ENCODE measurements at regions of chr6 and their contacts with region 1.

Region 1: DNA sequence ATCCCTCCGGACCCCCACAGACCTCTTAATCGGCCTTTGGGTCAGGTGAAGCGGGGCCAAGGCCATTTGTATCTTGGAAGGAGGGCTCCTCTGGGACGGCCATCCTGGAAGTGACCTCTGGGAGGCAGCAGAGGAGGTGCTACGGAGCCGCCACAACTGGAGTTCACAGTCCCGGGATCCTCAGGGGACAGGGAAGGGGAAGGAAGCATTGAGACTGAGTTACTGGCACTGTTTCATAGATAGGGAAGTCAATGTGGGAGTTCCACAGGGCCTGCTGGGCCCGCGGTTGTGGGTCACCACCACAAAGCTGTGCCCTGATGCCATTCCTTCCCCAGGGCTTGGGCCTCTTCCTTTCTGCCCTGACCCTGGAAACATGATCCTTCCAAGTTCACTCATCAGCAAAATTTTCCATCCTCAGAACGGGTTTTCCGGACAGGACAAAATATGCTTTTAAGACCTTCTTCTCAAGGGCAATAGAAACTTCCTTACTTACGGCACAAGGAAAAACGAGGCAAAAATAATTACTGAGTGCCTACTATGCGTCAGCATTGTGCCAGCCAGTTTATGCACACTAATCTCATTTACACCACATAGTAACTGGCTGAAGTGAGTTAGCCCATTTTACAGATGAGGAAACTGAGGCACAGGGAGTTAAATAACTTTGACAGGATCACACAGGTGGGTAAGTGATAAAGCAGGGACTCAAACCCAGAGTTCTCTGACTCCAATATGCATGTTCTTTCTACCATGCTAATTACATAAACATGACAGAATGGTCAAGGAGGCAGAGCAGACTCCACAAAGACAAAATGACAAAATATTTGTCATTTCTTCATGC is 143.8 kb downstream of the UNC5CL start:
- DNase-seq: peak; percentile 27 to 51
- ATAC-seq: peak; percentile 79 to 88
- H3K4me3 ChIP-seq: no peak overlapping the region
- H3K27ac ChIP-seq: no peak overlapping the region
- H3K4me1 ChIP-seq: peaks cover 2 to 13% of the 10 kb centered on the region in 2 donors
- H3K27me3 ChIP-seq: no peaks in the 10 kb centered on the region
- CTCF ChIP-seq: peak; percentile 31 to 73 (median 67)
- POLR2A ChIP-seq: no peak

Region 2: GRCh38 chr6:39934131-39934757 is 960.9 kb before region 1 on chr6 and contains the start of gene MOCS1:
- in situ Hi-C with region 1: no loop called
- intact Hi-C with region 1: loop called (anchors 10 kb)
- DNase-seq: peak; percentile 87 to 92
- ATAC-seq: peak; percentile 39 to 63
- H3K4me3 ChIP-seq: peak within 1 kb of the TSS; percentile 80 to 98 (median 94)
- H3K27ac ChIP-seq: peak within 1 kb of the TSS; percentile 95 to 99 (median 97)
- H3K4me1 ChIP-seq: peaks cover 59 to 63% of the 10 kb centered on the region in 2 donors
- H3K27me3 ChIP-seq: no peaks in the 10 kb centered on the region
- CTCF ChIP-seq: no peak
- POLR2A ChIP-seq: peak; percentile 96 to 97
- total RNA-seq, gene MOCS1: 26.4 to 61.7 (median 38.4) TPM

Region 3: DNA sequence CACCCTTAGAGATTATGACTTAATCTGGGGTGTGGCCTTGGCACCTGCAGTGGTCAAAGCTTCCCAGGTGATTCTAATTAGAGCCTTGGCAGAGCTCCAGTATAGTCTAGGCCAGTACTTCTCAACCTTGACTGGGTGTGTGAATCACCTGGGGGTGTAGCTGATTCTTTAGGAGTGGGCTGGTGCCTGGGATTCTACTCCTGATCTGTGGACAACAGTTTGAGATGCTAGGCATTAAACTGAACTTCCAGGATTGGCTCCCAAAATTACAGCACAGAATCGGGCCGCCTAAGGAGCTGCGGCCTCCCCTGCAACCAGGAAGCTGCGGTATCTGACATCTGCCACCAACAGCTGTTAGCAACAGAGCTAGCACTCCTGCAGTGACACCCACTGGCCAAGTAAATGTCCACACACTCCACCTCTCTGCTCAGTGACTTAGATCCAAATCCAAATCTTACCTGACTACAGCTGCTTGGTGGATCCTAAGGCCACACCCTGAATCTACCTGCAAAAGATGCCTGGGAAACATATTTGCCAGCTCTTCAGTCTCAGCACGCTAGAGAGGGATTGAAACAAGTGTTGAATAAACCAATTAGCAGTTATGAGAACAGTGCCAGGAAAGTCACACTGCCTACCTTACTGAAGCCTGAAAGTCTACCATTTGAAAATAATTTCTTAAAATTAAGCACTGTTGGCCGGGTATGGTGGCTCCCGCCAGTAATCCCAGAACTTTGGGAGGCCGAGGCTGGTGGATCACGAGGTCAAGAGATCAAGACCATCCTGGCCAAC is 17.2 kb after region 1 on chr6:
- in situ Hi-C with region 1: no loop called
- intact Hi-C with region 1: loop called (anchors 1 kb)
- DNase-seq: peak in 1 of 2 donors; percentile 59
- ATAC-seq: peak; percentile 90 to 97
- H3K4me3 ChIP-seq: no peak overlapping the region
- H3K27ac ChIP-seq: no peak overlapping the region
- H3K4me1 ChIP-seq: peaks cover 6 to 7% of the 10 kb centered on the region in 2 donors
- H3K27me3 ChIP-seq: no peaks in the 10 kb centered on the region
- CTCF ChIP-seq: peak; percentile 39 to 67 (median 63)
- POLR2A ChIP-seq: no peak

Region 4: DNA sequence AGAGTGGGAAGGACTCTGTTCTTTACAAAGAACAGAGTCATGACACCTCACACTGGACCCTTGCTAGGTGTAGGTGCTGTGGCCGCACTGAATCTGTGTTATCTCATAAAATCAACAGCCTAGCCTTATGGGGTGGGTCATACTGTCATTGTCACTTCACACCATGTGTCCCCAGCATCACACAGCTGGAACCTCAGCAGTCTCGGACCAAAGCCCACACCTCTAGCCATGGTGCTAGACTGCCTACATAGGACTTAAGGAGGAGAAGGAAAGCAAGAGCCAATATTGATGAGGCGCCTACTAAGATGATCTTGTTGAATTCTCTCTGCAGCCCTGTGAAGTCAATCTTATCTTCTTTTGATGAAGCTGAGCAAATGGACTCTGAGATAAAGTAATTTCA is 112.8 kb after region 1 on chr6:
- in situ Hi-C with region 1: no loop called
- intact Hi-C with region 1: no loop called
- DNase-seq: no peak
- ATAC-seq: no peak
- H3K4me3 ChIP-seq: no peak overlapping the region
- H3K27ac ChIP-seq: no peak overlapping the region
- H3K4me1 ChIP-seq: peaks cover 0 to 3% of the 10 kb centered on the region in 2 donors
- H3K27me3 ChIP-seq: no peaks in the 10 kb centered on the region
- CTCF ChIP-seq: no peak
- POLR2A ChIP-seq: no peak

Region 5: GRCh38 chr6:41021832-41022231 is 126.7 kb after region 1 on chr6:
- in situ Hi-C with region 1: loop called (anchors 5 to 10 kb)
- intact Hi-C with region 1: no loop called
- DNase-seq: no peak
- ATAC-seq: peak; percentile 84 to 87
- H3K4me3 ChIP-seq: no peak overlapping the region
- H3K27ac ChIP-seq: peak overlapping the region in 1 of 4 donors; percentile 29
- H3K4me1 ChIP-seq: peaks cover 0 to 8% of the 10 kb centered on the region in 2 donors
- H3K27me3 ChIP-seq: no peaks in the 10 kb centered on the region
- CTCF ChIP-seq: peak in 2 of 5 experiments; percentile 29 to 31
- POLR2A ChIP-seq: no peak

Region 6: GRCh38 chr6:41027799-41028628 is 132.8 kb after region 1 on chr6:
- in situ Hi-C with region 1: loop called (anchors 5 to 10 kb)
- intact Hi-C with region 1: loop called (anchors 1 kb)
- DNase-seq: peak; percentile 67 to 79
- ATAC-seq: peak; percentile 82 to 91
- H3K4me3 ChIP-seq: peak overlapping the region; percentile 60 to 79 (median 70)
- H3K27ac ChIP-seq: peak overlapping the region; percentile 81 to 85 (median 82)
- H3K4me1 ChIP-seq: peaks cover 15 to 16% of the 10 kb centered on the region in 2 donors
- H3K27me3 ChIP-seq: no peaks in the 10 kb centered on the region
- CTCF ChIP-seq: peak; percentile 99 to 100 (median 99)
- POLR2A ChIP-seq: no peak

Region 7: GRCh38 chr6:41488433-41489119 is 593.4 kb after region 1 on chr6:
- in situ Hi-C with region 1: no loop called
- intact Hi-C with region 1: no loop called
- DNase-seq: no peak
- ATAC-seq: no peak
- H3K4me3 ChIP-seq: no peak overlapping the region
- H3K27ac ChIP-seq: no peak overlapping the region
- H3K4me1 ChIP-seq: no peaks in the 10 kb centered on the region
- H3K27me3 ChIP-seq: peaks cover 0 to 7% (median 0%) of the 10 kb centered on the region in 3 donors
- CTCF ChIP-seq: no peak
- POLR2A ChIP-seq: no peak